Dorsolateral prefrontal cortex (tissue), 120 donors: ENCODE measurements at regions of chr17 and their contacts with region 1.

Region 1: GRCh38 chr17:75430159-75430974 is 24.9 kb upstream of the GRB2 start:
- DNase-seq: peak in 2 of 10 donors; percentile 21 to 45
- H3K4me3 ChIP-seq: peak overlapping the region in 2 of 59 donors; percentile 3 to 9
- H3K27ac ChIP-seq: peak overlapping the region in 31 of 59 donors; percentile 0 to 84 (median 41)
- H3K27me3 ChIP-seq: no peaks in the 10 kb centered on the region
- CTCF ChIP-seq: peak in 1 of 56 donors; percentile 9

Region 2: DNA sequence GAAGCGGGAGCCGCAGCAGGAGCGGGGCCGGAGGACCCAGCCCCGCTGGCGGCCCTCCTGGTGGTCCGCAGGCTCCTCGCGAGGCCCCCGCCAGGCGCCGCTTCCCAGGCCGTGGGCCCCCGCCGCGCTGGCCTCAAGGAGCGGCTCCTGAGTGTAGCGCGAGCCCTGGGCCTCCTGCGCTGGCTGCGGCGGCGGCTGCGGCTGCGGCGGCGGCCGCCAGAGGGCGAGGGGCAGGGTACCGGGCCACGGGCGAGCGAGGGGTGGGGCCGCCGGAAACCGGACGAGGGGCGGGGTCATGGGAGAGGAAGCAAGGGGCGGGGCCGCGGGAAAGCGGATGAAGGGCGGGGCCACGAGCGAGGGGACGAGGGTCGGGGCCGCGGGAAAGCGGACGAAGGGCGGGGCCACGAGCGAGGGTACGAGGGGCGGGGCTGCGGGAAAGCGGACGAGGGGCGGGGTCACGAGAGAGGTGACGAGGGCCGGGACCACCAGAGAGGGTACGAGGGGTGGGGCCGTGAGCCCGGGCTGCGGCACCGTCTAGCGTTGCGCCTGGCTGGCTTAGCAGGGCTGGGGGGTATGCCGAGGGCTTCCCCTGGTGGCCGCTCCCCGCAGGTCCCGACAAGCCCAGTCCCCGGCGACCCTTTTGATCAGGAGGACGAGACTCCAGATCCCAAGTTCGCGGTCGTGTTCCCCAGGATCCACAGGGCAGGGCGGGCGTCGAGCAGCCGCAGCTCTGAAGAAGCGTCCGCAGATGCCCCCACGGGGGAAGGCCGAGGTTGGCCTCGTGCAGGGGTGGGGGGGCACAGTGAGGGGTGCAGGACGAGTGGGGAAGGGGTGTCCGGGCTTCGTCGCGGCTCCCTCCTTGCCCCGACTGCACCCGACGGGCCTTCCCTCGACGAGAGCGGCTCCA is 158.9 kb after region 1 on chr17:
- intact Hi-C with region 1: loop called in 1 of 2 experiments (anchors 2 kb)
- DNase-seq: peak; percentile 84 to 94 (median 89)
- H3K4me3 ChIP-seq: peak overlapping the region; percentile 45 to 83 (median 68)
- H3K27ac ChIP-seq: peak overlapping the region; percentile 5 to 97 (median 90)
- H3K27me3 ChIP-seq: peaks cover 0 to 16% (median 0%) of the 10 kb centered on the region in 45 donors
- CTCF ChIP-seq: peak in 51 of 56 donors; percentile 6 to 84 (median 56)